H1 (cell line): ENCODE measurements at regions of chr1 and their contacts with region 1.

Region 1: DNA sequence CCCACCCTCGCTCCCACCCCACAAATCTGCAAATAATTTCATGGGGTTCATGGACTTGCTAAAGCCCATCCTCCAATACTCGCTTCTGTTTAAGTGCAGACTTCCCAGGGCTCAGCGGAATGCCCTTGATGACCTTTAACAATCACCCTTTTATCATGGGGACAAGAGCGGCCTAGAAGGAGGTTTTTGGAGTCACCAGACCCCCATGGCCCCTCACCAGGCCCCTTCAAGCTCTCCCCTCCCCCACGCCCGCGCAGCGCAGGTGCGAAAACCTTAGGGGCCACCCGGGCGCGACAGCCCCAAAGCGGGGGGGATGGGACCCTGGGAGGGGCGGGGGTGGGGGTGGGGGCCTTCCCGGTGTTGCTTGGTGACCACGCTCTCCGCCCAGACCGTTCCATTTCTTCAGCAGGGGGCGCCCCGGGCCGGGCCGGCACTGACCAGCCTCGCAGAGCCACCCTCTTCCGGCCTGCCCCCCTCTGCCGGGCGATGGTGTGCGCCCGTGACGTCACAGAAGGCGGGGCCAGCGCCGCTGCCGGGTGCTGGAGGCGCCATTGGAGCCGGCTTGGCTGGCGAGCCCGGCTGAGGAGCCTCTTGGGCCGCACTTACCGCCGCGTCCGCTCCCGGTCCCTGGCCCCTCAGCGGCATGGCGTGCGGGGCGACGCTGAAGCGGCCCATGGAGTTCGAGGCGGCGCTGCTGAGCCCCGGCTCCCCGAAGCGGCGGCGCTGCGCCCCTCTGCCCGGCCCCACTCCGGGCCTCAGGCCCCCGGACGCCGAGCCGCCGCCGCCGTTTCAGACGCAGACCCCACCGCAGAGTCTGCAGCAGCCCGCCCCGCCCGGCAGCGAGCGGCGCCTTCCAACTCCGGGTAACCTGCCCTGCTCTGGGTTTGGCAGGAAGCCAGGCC is at the start of gene AKIRIN1:
- DNase-seq: peak; percentile 89 to 99
- H3K4me3 ChIP-seq: peak within 1 kb of the TSS; percentile 83 to 100 (median 92)
- H3K27ac ChIP-seq: peak within 1 kb of the TSS; percentile 95
- H3K4me1 ChIP-seq: peaks cover 5 to 18% (median 13%) of the 10 kb centered on the region in 4 experiments
- H3K27me3 ChIP-seq: no peaks in the 10 kb centered on the region
- CTCF ChIP-seq: no peak
- EP300 ChIP-seq: peak in 1 of 2 experiments; percentile 100; a peak in 2 of 3 replicates
- POLR2A ChIP-seq: peak; percentile 93 to 95
- RAD21 ChIP-seq: peak in 1 of 2 experiments; percentile 25; a peak in 2 of 4 replicates
- total RNA-seq, gene AKIRIN1: 236 TPM in 2 replicates

Region 2: GRCh38 chr1:38804062-38804886 is 186.7 kb before region 1 on chr1:
- CTCF ChIA-PET with region 1: no interaction called
- POLR2A ChIA-PET with region 1: no interaction called
- DNase-seq: peak in 1 of 2 experiments; percentile 72
- H3K4me3 ChIP-seq: peak overlapping the region; percentile 30 to 56 (median 32); a peak in 7 of 8 replicates
- H3K27ac ChIP-seq: no peak overlapping the region
- H3K4me1 ChIP-seq: peaks cover 5 to 12% (median 8%) of the 10 kb centered on the region in 4 experiments
- H3K27me3 ChIP-seq: peaks cover 0 to 34% (median 28%) of the 10 kb centered on the region in 4 experiments; a peak in 6 of 7 replicates
- CTCF ChIP-seq: no peak
- EP300 ChIP-seq: no peak; a peak in 1 of 3 replicates
- POLR2A ChIP-seq: no peak
- RAD21 ChIP-seq: 0 out of 4 replicates have a peak, but pooled peaks of 1 of the 2 experiments have one; percentile 15

Region 3: DNA sequence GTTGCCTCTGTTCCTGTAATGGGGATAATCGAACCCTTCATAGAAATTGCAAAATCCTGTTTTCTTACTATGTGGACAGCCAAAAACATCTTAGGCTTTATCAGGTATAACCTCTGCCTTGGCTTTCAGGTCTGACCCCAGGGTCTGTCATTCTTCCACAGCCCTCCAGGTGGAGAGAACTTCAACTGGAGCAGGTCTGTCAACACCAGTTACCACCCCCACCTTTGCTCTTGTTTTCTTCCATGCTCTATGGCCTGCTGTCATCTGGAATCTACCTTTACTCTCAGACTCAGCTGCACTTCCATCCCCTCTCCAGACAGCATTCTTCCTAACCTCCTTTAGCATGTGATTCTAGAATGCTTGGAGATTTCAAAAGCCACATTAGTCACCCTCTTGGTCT is 99.2 kb before region 1 on chr1:
- CTCF ChIA-PET with region 1: no interaction called
- POLR2A ChIA-PET with region 1: no interaction called
- DNase-seq: peak; percentile 5 to 44
- H3K4me3 ChIP-seq: no peak overlapping the region
- H3K27ac ChIP-seq: no peak overlapping the region
- H3K4me1 ChIP-seq: peaks cover 0 to 2% (median under 1%) of the 10 kb centered on the region in 4 experiments; a peak in 2 of 7 replicates
- H3K27me3 ChIP-seq: no peaks in the 10 kb centered on the region; a peak in 1 of 7 replicates
- CTCF ChIP-seq: peak; percentile 47 to 72 (median 49); a peak in 3 of 4 replicates
- EP300 ChIP-seq: no peak
- POLR2A ChIP-seq: no peak
- RAD21 ChIP-seq: peak; percentile 65 to 73

Region 4: DNA sequence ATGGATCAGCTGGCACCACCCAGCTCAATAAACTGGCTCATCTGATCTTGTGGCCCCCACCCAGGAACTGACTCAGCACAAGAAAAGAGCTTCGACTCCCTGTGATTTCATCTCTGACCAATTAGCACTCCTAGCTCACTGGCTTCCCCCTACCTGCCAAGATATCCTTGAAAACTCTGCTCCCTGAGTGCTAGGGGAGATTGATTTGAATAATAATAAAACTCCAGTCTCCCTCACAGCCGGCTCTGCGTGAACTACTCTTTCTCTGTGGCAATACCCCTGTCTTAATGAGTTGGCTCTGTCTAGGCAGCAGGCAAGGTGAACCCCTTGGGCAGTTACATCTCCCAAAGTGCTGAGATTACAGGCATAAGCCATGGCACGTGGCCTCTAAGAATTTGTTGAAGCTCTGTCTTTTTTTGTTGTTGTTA is 37.5 kb before region 1 on chr1:
- CTCF ChIA-PET with region 1: no interaction called
- POLR2A ChIA-PET with region 1: interaction called, 13 read pairs
- DNase-seq: peak; percentile 58 to 63
- H3K4me3 ChIP-seq: no peak overlapping the region
- H3K27ac ChIP-seq: peak overlapping the region; percentile 52
- H3K4me1 ChIP-seq: peaks cover 0 to 7% (median 0%) of the 10 kb centered on the region in 4 experiments; a peak in 3 of 7 replicates
- H3K27me3 ChIP-seq: no peaks in the 10 kb centered on the region
- CTCF ChIP-seq: no peak
- EP300 ChIP-seq: peak in 1 of 2 experiments; percentile 78; a peak in 2 of 3 replicates
- POLR2A ChIP-seq: peak in 1 of 2 experiments; percentile 45; a peak in 1 of 3 replicates
- RAD21 ChIP-seq: no peak

Region 5: DNA sequence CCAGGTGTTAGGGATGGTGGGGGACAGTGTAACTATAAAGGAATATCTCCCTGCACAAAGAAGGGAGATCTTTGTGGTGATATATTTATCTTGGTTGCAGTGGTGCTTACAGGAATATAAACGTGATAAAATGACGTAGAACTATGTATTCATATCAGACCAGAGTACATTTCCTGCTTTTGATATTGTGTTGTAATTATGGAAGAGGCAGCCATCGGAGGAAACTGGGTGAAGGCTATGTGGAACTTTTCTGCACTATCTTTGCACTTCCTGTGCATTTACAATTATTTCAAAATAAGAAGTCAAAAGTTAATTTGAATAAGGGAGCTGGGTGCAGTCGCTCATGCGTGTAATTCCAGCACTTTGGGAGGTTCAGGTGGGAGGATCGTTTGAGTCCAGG is 72.8 kb after region 1 on chr1:
- CTCF ChIA-PET with region 1: no interaction called
- POLR2A ChIA-PET with region 1: no interaction called
- DNase-seq: no peak
- H3K4me3 ChIP-seq: no peak overlapping the region
- H3K27ac ChIP-seq: no peak overlapping the region
- H3K4me1 ChIP-seq: no peaks in the 10 kb centered on the region
- H3K27me3 ChIP-seq: no peaks in the 10 kb centered on the region
- CTCF ChIP-seq: no peak
- EP300 ChIP-seq: no peak
- POLR2A ChIP-seq: no peak
- RAD21 ChIP-seq: no peak